ENCODE measurements at regions of chr7 and their contacts with region 1.

Region 1: GRCh38 chr7:103148994-103149807 is at the start of gene NAPEPLD:
- DNase-seq: peak; percentile 87 to 88
- ATAC-seq: peak; percentile 58
- total RNA-seq, gene NAPEPLD: 47.5 to 66.5 TPM

Region 2: DNA sequence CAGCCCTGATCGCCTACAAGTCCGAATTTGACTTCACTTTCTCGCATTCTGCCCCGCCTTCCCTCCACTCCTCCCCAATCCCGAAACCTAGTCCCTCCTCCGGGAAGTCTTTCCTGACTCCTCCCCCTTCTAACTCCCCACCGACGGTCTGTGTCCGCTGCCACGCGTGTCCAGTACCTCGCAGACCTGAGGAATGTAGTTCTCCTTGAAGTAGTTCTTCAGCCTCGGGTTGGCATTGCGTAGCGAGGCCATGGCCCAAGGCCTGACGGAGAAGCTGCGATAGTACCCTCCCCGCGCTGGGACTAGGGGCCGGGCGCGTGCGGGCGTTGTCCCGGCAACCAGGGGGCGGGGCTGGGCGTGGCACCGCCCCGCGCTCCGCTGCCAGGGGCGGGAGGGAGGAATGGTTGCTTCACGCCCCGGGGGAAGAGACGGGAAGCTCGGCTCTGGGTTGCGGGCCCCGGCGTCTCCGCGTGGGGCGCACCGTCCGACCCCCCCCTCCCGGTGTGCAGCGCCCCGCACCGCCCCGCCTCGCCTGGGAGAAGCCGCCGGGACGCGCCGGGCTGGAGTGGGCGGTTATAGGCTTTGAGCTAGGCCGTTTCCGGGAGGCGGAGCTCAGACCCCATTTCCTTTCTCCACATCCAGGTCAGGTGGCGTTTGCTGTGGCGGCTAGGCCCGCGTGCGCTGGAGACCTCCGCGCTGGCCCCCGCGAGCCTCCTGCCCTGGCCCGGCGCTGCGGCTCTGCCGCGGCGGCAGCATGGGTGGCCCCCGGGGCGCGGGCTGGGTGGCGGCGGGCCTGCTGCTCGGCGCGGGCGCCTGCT is 74.5 kb before region 1 on chr7 and contains the starts of genes ARMC10 and FBXL13:
- intact Hi-C with region 1: loop called in 1 of 2 experiments (anchors 5 kb)
- DNase-seq: peak; percentile 91 to 93
- ATAC-seq: peak; percentile 90
- total RNA-seq, gene ARMC10: 26.4 to 28.4 TPM
- total RNA-seq, gene FBXL13: 0.15 to 1.5 TPM